ENCODE measurements at regions of chr19 and their contacts with region 1.

Region 1: GRCh38 chr19:46674416-46675183 is 13.6 kb upstream of the DACT3 start:
- DNase-seq: peak; percentile 37
- ATAC-seq: peak; percentile 38; the same call in 1 of the 2 replicates
- H3K4me3 ChIP-seq: no peak overlapping the region
- H3K27ac ChIP-seq: no peak overlapping the region
- H3K4me1 ChIP-seq: no peaks in the 10 kb centered on the region
- H3K27me3 ChIP-seq: no peaks in the 10 kb centered on the region
- CTCF ChIP-seq: no peak

Region 2: DNA sequence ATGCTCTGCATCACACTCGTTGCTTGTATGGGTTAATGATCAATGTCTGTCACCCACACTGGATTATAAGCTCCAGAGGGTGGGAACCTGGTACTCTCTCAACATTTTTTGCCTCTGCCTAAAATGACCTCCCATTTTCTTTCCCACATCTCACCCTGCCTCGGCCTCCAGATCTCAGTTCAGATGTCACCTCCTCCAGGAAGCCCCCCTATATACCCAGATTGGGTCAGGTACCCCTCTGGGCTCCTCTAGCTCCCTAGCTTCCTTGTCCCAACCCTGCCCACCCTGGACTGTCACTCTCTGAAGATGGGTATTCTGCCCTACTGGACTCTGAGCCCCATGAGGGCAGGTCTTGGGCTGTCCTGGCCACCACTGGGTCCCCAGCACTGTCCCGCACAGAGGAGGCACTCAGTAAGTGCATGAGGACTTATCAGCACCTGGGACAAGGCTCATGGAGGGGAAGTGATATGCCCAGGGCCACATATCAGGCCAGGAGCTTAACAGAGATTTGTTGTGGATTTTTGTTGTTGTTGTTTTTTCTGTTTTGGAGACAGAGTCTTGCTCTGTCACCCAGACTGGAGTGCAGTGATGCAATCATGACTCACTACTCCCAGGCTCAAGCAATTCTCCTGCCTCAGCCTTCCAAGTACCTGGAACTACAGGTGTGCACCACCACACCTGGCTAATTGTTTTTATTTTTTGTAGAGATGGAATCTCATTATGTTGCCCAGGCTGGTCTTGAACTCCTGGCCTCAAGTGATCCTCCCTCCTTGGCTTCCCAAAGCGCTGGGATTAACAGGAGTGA is 18.5 kb after region 1 on chr19:
- CTCF ChIA-PET with region 1: no interaction called
- POLR2A ChIA-PET with region 1: interaction called, 11 read pairs
- intact Hi-C with region 1: no loop called
- DNase-seq: peak; percentile 30
- ATAC-seq: no peak
- H3K4me3 ChIP-seq: no peak overlapping the region
- H3K27ac ChIP-seq: no peak overlapping the region
- H3K4me1 ChIP-seq: no peaks in the 10 kb centered on the region
- H3K27me3 ChIP-seq: no peaks in the 10 kb centered on the region
- CTCF ChIP-seq: no peak